Panc1 (cell line): ENCODE measurements at regions of chr7 and their contacts with region 1.

Region 1: DNA sequence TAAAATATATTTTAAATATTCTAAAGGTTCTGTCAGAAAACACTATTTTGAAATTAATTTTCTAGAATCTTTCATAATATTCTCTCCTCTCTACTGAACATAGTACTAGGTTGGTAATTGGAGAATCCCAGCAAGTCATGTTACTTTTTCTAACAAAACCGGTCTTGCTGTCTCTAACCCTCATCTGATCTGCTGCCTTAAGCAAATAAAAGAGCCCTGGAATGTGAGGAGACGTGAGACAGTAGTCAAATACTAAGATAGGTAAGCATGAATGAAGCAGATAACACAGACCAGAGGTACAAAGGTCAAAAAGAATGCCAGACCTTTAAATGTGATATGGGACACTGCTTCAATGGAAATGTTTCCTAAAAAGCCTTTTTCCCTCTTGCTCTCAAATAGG is 462.4 kb upstream of the NUPR2 start:
- DNase-seq: no peak
- ATAC-seq: no peak
- H3K4me3 ChIP-seq: no peak overlapping the region
- H3K27ac ChIP-seq: no peak overlapping the region
- H3K4me1 ChIP-seq: no peaks in the 10 kb centered on the region
- H3K27me3 ChIP-seq: no peaks in the 10 kb centered on the region
- CTCF ChIP-seq: no peak

Region 2: GRCh38 chr7:56639173-56639746 is 60.6 kb after region 1 on chr7:
- CTCF ChIA-PET with region 1: no interaction called
- POLR2A ChIA-PET with region 1: no interaction called
- in situ Hi-C with region 1: no loop called
- intact Hi-C with region 1: loop called (anchors 10 kb)
- DNase-seq: no peak
- ATAC-seq: no peak
- H3K4me3 ChIP-seq: no peak overlapping the region
- H3K27ac ChIP-seq: no peak overlapping the region
- H3K4me1 ChIP-seq: no peaks in the 10 kb centered on the region
- H3K27me3 ChIP-seq: no peaks in the 10 kb centered on the region
- CTCF ChIP-seq: no peak